OCI-LY7 (cell line): ENCODE measurements at regions of chr5 and their contacts with region 1.

Region 1: DNA sequence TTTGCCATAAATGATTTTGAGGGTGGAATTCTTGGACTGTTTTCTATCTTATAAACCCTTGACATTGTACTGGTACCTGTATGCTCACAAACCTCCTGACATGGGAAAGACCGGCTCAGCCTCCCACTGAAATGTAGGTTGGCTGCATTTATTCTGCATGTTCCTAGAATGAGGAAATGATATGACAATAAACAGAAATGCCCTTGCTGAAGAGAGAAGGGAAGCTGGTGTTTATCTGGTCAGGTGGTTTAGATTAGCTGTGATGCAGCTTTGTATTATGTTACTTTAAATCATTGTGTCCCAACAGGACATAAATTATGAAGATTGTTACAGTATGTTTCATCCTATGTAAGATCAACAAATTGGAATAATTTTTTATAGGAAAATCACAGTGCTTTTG is 23.1 kb upstream of the CATSPER3 start:
- DNase-seq: no peak
- H3K4me3 ChIP-seq: no peak overlapping the region
- H3K27ac ChIP-seq: no peak overlapping the region
- H3K4me1 ChIP-seq: no peaks in the 10 kb centered on the region
- CTCF ChIP-seq: no peak

Region 2: GRCh38 chr5:134749415-134749814 is 195.2 kb before region 1 on chr5:
- CTCF ChIA-PET with region 1: no interaction called
- POLR2A ChIA-PET with region 1: no interaction called
- intact Hi-C with region 1: no loop called
- DNase-seq: no peak
- H3K4me3 ChIP-seq: no peak overlapping the region
- H3K27ac ChIP-seq: peak overlapping the region; percentile 12
- H3K4me1 ChIP-seq: peaks cover 16% of the 10 kb centered on the region
- CTCF ChIP-seq: no peak

Region 3: GRCh38 chr5:134891473-134891872 is 53.2 kb before region 1 on chr5:
- CTCF ChIA-PET with region 1: no interaction called
- POLR2A ChIA-PET with region 1: no interaction called
- intact Hi-C with region 1: no loop called
- DNase-seq: no peak
- H3K4me3 ChIP-seq: no peak overlapping the region
- H3K27ac ChIP-seq: no peak overlapping the region
- H3K4me1 ChIP-seq: no peaks in the 10 kb centered on the region
- CTCF ChIP-seq: no peak

Region 4: DNA sequence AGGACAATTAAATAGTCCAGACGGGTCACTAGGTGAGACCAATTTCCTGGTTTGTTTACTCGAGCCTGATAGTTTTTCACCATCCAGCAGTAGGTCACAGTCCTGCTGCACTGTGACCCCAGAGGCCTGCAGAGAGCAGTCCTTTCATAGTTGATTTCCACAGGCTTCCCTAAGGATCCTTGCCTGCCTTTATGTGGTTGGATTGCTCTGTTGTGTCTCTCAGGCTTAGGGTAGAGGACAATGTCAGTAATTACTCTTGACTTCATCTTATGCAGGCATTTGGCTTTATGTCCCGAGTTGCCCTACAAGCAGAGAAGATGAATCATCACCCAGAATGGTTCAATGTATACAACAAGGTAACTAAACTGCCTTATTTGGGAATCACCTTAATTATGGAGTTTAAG is 14.1 kb after region 1 on chr5:
- CTCF ChIA-PET with region 1: no interaction called
- POLR2A ChIA-PET with region 1: interaction called, 10 read pairs
- intact Hi-C with region 1: no loop called
- DNase-seq: no peak
- H3K4me3 ChIP-seq: no peak overlapping the region
- H3K27ac ChIP-seq: no peak overlapping the region
- H3K4me1 ChIP-seq: no peaks in the 10 kb centered on the region
- CTCF ChIP-seq: no peak

Region 5: DNA sequence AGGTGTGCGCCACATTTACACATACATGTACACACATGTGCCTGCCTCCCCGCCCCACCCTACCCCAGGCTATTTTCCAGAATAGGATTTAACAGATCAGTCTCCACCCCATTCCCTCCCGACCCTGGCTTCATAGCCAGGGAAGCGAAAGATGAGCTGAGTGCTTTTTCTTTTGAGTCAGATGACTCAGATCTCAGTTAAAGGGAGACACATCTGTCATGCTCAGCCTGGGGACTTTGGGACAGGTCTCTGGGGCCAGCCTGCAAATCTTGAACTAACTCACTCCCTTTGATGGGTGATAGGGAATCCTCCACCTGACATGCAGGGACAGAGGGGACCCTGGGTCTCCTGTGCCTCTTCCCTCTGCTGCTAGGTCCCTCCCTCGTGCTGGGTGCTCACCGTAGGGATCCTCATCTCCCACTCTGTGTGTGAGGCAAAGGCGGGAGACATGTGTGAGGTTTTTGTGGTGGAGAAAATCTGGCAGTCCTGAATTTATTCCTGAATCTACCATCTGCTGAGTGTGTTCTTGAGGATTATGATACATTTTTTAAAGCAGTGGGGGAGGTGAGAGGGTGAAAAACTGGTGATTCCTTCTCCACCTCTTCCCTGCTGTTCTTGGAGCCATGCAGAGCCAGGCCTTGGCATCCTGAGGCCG is 553.5 kb after region 1 on chr5:
- CTCF ChIA-PET with region 1: no interaction called
- POLR2A ChIA-PET with region 1: no interaction called
- intact Hi-C with region 1: no loop called
- DNase-seq: no peak
- H3K4me3 ChIP-seq: no peak overlapping the region
- H3K27ac ChIP-seq: no peak overlapping the region
- H3K4me1 ChIP-seq: no peaks in the 10 kb centered on the region
- CTCF ChIP-seq: no peak